ENCODE measurements at regions of chr6 and their contacts with region 1.

Region 1: DNA sequence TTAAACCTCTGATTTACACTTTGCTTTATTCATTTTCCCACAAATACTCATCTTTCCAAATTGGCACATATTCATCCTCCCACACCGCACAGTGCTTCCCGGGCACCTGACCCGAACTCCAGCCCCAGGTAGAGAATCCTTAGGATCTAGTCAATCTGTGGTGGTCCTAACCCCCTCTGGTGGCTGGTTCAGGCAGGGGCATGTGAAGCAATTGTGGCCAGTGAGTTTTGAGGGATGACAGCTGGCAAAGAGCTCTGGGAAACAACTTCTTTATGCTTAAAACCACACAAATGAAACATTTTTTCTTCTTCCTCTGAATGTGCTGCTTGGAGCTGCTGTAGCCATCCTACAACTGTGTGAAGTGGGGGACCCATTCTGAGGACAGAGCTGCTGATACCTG is 54.7 kb downstream of the ELOVL5 start:
- DNase-seq: no peak
- ATAC-seq: no peak

Region 2: DNA sequence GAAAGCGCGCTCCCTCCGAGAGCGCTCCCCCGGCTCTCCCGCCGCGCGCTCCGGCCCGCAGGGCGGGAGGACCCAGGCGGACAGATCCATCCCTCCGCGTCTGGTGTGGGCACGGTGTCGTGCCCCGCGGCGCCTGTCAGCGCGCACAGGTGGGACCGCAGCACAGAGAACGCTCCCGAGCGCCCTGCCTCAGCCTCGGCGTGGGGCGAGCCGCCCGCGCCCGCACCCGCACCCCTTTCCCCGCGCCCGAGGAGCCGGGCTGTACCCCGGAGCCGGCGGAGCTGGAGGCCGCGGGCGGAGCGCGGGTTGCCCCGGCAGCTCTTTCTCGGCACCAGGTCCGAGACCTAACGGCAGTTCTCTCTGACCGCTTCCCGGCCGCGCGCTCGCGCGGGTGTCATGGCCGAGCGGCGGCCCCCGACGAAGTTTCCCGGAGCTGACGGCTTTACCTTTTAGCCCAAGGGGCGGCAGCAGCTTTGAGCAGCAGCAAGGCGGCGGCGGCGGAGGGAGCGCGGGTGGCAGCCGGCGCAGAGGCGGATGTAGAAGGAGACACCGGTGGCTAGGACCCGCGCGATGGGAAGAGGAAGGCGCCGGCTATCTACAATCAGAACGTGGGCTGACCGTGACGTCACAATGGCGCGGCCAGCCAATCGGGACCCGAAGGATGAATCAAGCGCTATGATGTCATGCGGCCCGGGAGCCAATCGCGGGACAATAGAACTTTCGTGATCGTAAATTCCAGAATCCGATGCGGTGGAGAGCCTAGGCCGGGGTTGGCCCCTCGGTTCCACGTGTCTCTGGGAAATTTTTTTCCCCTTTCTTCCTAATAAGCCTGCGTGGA is 54.5 kb after region 1 on chr6 and contains the start of gene ELOVL5:
- intact Hi-C with region 1: loop called (anchors 10 kb)
- DNase-seq: peak; percentile 99
- ATAC-seq: peak; percentile 94
- total RNA-seq, gene ELOVL5: 20.8 TPM

Measured in Right ventricle myocardium superior (tissue), 1 donor.